Right ventricle myocardium inferior (tissue), 1 donor: ENCODE measurements at regions of chr3 and their contacts with region 1.

Region 1: DNA sequence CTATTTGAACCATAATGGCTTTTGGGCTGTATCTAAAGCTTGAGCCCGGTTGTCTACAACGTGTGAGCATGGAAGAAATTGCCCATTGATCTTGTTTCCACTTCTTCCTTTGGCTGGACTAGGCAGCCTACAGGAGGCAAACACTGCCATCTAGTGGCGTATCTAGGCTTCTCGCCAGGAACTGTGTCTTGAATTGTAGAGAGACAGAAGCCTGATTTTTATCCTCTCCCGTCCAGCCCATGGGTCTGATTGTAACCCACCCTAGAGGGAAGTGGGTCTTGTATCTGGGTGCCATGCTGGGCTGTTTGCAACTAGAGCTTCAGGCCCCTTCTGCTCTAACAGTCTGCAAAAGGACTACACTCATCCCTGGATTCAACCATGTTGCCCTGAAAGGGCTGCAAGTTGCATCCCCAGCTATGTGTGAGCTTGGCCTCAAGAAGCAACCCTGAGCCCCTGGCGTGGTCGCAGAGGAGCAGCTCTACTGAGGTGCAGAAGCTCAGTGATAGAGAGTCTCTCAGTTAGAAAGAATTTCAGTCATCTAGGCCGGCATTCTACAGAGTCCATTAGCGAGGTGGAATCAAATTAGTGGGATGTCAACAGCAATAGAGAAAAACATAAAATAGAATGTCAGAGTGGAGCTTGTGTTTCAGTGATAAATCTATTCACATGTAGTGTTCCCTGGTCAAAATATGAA is 170.2 kb upstream of the UMPS start:
- DNase-seq: no peak
- ATAC-seq: peak; percentile 68

Region 2: DNA sequence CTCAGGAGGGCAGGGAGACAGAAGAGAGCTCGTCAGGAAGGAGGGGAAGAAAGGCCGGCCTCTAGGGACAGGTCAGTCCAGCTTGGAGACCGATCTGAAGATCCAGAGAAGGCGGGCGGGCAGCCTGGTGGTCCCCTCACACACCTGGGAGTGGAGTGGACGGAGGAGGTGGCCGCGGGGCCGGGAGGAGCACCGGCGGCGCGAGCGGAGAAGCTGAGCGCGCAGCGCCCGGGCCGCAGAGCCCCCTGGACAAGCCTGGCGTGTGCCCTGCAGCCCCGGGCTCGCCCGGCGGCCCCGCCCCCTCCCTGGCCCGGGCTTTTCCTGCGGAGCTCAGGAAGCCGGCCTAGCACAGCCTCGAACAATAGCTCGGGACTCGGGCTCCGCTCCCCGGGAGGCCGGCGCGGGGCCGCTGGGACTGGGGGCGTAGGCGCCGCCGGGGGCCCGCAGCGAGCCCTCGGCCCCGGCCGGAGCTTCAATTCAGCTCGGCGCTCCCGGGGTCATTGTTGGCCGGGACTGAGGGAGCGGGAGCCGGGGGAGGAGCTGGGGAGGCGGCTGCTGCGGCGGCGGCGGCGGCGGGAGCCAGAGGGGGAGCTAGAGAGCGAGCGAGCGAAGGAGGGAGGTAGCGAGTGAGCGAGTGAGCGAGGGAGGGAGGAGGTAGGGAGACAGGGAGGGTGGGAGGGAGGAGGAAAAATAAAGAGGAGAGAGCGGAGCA is 527.2 kb before region 1 on chr3:
- intact Hi-C with region 1: loop called (anchors 10 kb)
- DNase-seq: peak; percentile 89
- ATAC-seq: peak; percentile 96

Region 3: GRCh38 chr3:124688581-124689454 is 128.8 kb after region 1 on chr3:
- intact Hi-C with region 1: loop called (anchors 1 kb)
- DNase-seq: peak; percentile 84
- ATAC-seq: peak; percentile 74